Gastrocnemius medialis (tissue), 4 donors: ENCODE measurements at regions of chr16 and their contacts with region 1.

Region 1: GRCh38 chr16:30922960-30923535 is 324 bp upstream of the FBXL19 start:
- DNase-seq: peak; percentile 100
- ATAC-seq: peak; percentile 79
- H3K4me3 ChIP-seq: peak overlapping the region; percentile 74 to 93 (median 88)
- H3K27ac ChIP-seq: peak overlapping the region; percentile 92 to 97 (median 96)
- H3K4me1 ChIP-seq: peaks cover 11 to 16% of the 10 kb centered on the region in 2 donors
- H3K27me3 ChIP-seq: no peaks in the 10 kb centered on the region
- CTCF ChIP-seq: no peak
- POLR2A ChIP-seq: peak in 1 of 2 donors; percentile 64

Region 2: DNA sequence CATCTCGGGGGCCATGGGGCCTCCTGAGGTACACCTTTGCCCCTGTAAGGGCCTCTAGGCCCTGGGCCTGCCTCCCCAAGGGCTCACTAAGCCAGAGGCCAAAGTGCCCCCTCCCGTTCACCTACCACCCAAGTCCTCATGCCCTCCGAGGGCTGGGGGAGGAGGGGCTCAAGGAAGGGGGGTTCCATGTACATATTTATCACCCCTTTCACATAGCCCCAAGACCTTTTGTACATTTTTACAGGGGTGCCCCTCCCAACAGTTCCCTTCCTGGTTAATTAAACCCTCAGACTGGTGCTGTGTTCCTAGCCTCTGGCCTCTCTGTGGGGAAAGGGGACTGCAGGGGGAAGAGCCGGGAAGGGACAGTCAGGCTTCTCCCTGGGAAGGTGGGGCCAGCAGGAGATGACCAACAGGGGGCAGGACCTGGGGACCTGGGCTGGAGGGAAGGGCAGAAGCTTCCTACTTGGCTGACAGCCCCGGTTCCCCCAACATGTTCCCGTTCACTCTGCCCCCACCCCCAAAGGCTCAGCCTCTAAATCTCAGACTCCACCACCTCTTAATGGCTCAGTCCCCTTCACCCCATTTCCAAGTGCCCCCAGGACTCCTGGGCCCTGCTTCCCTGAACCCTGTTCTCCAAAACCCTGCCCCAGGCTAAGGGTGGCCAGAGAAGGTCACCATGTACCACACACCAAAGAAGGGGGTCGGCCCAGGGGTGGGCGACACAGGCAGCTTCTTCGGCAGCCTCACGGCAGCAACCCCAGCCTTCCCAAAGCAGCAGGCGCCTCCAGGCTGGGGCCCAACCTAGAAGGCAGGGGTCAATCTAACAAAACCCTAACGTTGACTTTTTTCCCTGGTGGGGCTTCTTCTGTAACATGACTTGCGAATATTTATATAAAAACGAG is 252.9 kb before region 1 on chr16:
- in situ Hi-C with region 1: no loop called
- intact Hi-C with region 1: no loop called
- DNase-seq: no peak
- ATAC-seq: no peak
- H3K4me3 ChIP-seq: no peak overlapping the region
- H3K27ac ChIP-seq: no peak overlapping the region
- H3K4me1 ChIP-seq: no peaks in the 10 kb centered on the region
- H3K27me3 ChIP-seq: no peaks in the 10 kb centered on the region
- CTCF ChIP-seq: no peak
- POLR2A ChIP-seq: no peak

Region 3: DNA sequence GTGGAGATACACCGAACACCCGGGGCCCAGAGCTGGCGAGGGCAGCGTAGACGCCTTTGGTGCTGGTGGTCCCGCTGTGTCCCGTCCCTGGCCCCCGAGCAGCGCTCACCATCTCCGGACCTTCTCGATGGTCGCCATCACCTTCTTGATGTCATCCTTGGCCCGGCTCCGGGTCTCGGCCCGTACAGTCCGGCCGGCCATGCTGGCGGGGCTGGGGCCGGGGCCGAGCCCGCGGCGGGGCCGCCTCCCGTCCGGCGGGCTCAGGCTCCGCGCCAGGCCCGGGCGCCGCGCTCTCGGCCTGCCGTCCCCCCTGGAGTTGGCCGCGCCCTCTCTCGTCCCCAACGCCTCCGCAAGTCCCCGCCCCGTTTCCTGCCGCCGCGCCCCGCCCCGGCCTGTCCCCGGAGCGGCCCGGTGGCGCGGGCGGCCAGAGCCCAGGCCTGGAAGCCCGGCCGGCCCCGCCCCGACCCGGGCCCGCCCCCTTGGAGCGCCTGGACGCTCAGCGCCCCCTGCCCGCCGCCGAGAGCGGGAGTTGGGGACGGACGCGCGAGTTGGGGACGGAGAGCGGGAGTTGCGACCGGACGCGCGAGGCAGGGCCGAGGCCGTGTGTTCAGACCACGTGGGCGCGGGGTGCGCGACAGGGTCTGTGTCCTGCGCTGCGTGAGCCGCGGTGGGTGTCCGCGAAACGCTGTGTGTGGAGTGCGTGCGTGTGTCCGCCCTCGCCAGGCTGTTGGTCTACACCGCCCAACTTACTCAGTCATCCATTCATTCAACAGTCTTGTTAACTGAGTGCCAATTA is 29.1 kb before region 1 on chr16 and contains the start of gene BCL7C:
- in situ Hi-C with region 1: no loop called
- intact Hi-C with region 1: loop called (anchors 1 kb)
- DNase-seq: peak; percentile 89
- ATAC-seq: peak; percentile 59 to 67
- H3K4me3 ChIP-seq: peak within 1 kb of the TSS; percentile 71 to 81 (median 80)
- H3K27ac ChIP-seq: peak within 1 kb of the TSS; percentile 93 to 100 (median 96)
- H3K4me1 ChIP-seq: peaks cover 34 to 39% of the 10 kb centered on the region in 2 donors
- H3K27me3 ChIP-seq: no peaks in the 10 kb centered on the region
- CTCF ChIP-seq: peak; percentile 31 to 71 (median 45)
- POLR2A ChIP-seq: peak; percentile 35 to 57
- total RNA-seq, gene BCL7C: 16.4 to 24.5 (median 22.3) TPM

Region 4: GRCh38 chr16:30904114-30904780 is 18.8 kb before region 1 on chr16:
- in situ Hi-C with region 1: no loop called
- intact Hi-C with region 1: no loop called
- DNase-seq: no peak
- ATAC-seq: no peak
- H3K4me3 ChIP-seq: no peak overlapping the region
- H3K27ac ChIP-seq: peak overlapping the region; percentile 77 to 89 (median 88)
- H3K4me1 ChIP-seq: peaks cover 8 to 12% of the 10 kb centered on the region in 2 donors
- H3K27me3 ChIP-seq: no peaks in the 10 kb centered on the region
- CTCF ChIP-seq: no peak
- POLR2A ChIP-seq: no peak

Region 5: GRCh38 chr16:30941600-30942425 is 18.8 kb after region 1 on chr16:
- in situ Hi-C with region 1: no loop called
- intact Hi-C with region 1: loop called (anchors 1 kb)
- DNase-seq: peak; percentile 56 to 81
- ATAC-seq: peak; percentile 75 to 90
- H3K4me3 ChIP-seq: no peak overlapping the region
- H3K27ac ChIP-seq: peak overlapping the region in 2 of 4 donors; percentile 19 to 25
- H3K4me1 ChIP-seq: peaks cover 5 to 6% of the 10 kb centered on the region in 2 donors
- H3K27me3 ChIP-seq: no peaks in the 10 kb centered on the region
- CTCF ChIP-seq: peak; percentile 64 to 86 (median 82)
- POLR2A ChIP-seq: no peak

Region 6: GRCh38 chr16:30948667-30949649 is 25.9 kb after region 1 on chr16 and contains the start of gene ORAI3:
- in situ Hi-C with region 1: no loop called
- intact Hi-C with region 1: loop called (anchors 2 kb)
- DNase-seq: peak; percentile 61 to 62
- ATAC-seq: peak; percentile 72 to 82
- H3K4me3 ChIP-seq: peak within 1 kb of the TSS; percentile 69 to 100 (median 93)
- H3K27ac ChIP-seq: peak within 1 kb of the TSS; percentile 74 to 94 (median 90)
- H3K4me1 ChIP-seq: peaks cover 14 to 31% of the 10 kb centered on the region in 2 donors
- H3K27me3 ChIP-seq: no peaks in the 10 kb centered on the region
- CTCF ChIP-seq: no peak
- POLR2A ChIP-seq: peak; percentile 65 to 77
- total RNA-seq, gene ORAI3: 10.3 to 15.6 (median 12.5) TPM

Region 7: DNA sequence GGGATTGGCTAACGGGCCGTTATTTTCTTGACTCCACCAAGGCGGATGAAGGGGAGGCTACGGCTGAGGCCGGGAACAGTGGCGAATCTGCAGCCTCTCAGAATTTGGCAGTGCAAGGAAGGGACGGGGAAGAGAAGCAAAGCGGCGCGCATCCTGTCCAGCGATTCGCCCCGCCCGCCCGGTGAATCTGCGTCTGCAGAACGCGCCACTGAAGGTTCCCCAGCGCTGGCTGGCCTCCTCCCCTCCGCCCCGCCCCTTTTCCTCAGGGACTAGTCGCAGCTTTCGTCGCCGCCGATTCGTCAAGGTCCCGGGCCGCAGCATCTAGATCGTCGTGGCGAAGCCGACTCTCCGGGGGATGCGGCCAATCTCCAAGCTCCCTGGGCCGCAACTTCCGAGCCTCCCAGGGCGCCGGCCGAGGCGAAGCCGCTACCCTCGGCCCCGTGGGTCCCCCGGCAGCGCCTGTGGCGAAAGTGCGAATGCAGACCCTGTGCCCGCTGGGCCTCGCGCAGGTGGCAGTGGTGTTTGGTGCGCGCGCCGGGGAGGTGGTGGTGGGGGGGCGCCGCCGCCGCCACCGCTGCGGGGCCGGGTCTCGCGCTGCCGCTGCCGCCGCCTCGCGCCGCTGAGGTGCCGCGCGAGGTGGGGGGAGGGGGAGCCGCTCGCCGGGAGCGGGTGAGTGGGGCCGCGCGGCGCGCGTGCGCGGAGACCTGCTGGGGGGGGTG is 34.6 kb after region 1 on chr16 and contains the start of gene SETD1A:
- in situ Hi-C with region 1: no loop called
- intact Hi-C with region 1: loop called (anchors 1 kb)
- DNase-seq: peak; percentile 95
- ATAC-seq: peak; percentile 92 to 93
- H3K4me3 ChIP-seq: peak within 1 kb of the TSS; percentile 70 to 94 (median 84)
- H3K27ac ChIP-seq: peak within 1 kb of the TSS; percentile 97 to 99 (median 98)
- H3K4me1 ChIP-seq: peaks cover 11 to 17% of the 10 kb centered on the region in 2 donors
- H3K27me3 ChIP-seq: no peaks in the 10 kb centered on the region
- CTCF ChIP-seq: peak in 2 of 5 experiments; percentile 22 to 41
- POLR2A ChIP-seq: peak; percentile 66 to 75
- total RNA-seq, gene SETD1A: 3.8 to 15.4 (median 9.8) TPM

Region 8: GRCh38 chr16:31618130-31618529 is 695.1 kb after region 1 on chr16:
- in situ Hi-C with region 1: no loop called
- intact Hi-C with region 1: no loop called
- DNase-seq: no peak
- ATAC-seq: no peak
- H3K4me3 ChIP-seq: no peak overlapping the region
- H3K27ac ChIP-seq: no peak overlapping the region
- H3K4me1 ChIP-seq: no peaks in the 10 kb centered on the region
- H3K27me3 ChIP-seq: no peaks in the 10 kb centered on the region
- CTCF ChIP-seq: no peak
- POLR2A ChIP-seq: no peak